ENCODE measurements at regions of chr6 and their contacts with region 1.

Region 1: GRCh38 chr6:15245361-15246216 is at the start of gene JARID2:
- DNase-seq: peak; percentile 94 to 98 (median 95)
- H3K4me3 ChIP-seq: peak within 1 kb of the TSS; percentile 75 to 96
- H3K4me3 Mint-ChIP-seq: peak within 1 kb of the TSS; percentile 98 to 100 (median 99)
- H3K27ac ChIP-seq: peak within 1 kb of the TSS; percentile 90
- H3K27ac Mint-ChIP-seq: peak within 1 kb of the TSS; percentile 96 to 99 (median 98)
- H3K4me1 ChIP-seq: peaks cover 32% of the 10 kb centered on the region
- H3K4me1 Mint-ChIP-seq: peaks cover 19 to 49% (median 29%) of the 10 kb centered on the region in 4 donors
- H3K27me3 ChIP-seq: no peaks in the 10 kb centered on the region
- H3K27me3 Mint-ChIP-seq: peaks cover 0 to 5% of the 10 kb centered on the region in 2 donors
- total RNA-seq, gene JARID2: 20.2 to 21.6 TPM

Region 2: GRCh38 chr6:13574149-13574570 is 1671.4 kb before region 1 on chr6:
- CTCF ChIA-PET with region 1: no interaction called
- POLR2A ChIA-PET with region 1: no interaction called
- intact Hi-C with region 1: loop called (anchors 2 kb)
- DNase-seq: peak; percentile 94 to 97 (median 96)
- H3K4me3 ChIP-seq: peak overlapping the region; percentile 70 to 86
- H3K4me3 Mint-ChIP-seq: peak overlapping the region; percentile 92 to 98 (median 96)
- H3K27ac ChIP-seq: peak overlapping the region; percentile 89
- H3K27ac Mint-ChIP-seq: peak overlapping the region; percentile 96 to 99 (median 98)
- H3K4me1 ChIP-seq: peaks cover 16% of the 10 kb centered on the region
- H3K4me1 Mint-ChIP-seq: peaks cover 13 to 40% (median 24%) of the 10 kb centered on the region in 4 donors
- H3K27me3 ChIP-seq: no peaks in the 10 kb centered on the region
- H3K27me3 Mint-ChIP-seq: peaks cover 0 to 2% of the 10 kb centered on the region in 2 donors

Region 3: GRCh38 chr6:14117158-14118090 is 1128.2 kb before region 1 on chr6 and contains the start of gene CD83:
- CTCF ChIA-PET with region 1: no interaction called
- POLR2A ChIA-PET with region 1: no interaction called
- intact Hi-C with region 1: loop called (anchors 5 kb)
- DNase-seq: peak; percentile 85 to 91 (median 87)
- H3K4me3 ChIP-seq: peak within 1 kb of the TSS; percentile 80 to 93
- H3K4me3 Mint-ChIP-seq: peak within 1 kb of the TSS; percentile 88 to 98 (median 95)
- H3K27ac ChIP-seq: peak within 1 kb of the TSS; percentile 91
- H3K27ac Mint-ChIP-seq: peak within 1 kb of the TSS; percentile 92 to 97 (median 96)
- H3K4me1 ChIP-seq: peaks cover 41% of the 10 kb centered on the region
- H3K4me1 Mint-ChIP-seq: peaks cover 29 to 53% (median 31%) of the 10 kb centered on the region in 4 donors
- H3K27me3 ChIP-seq: no peaks in the 10 kb centered on the region
- H3K27me3 Mint-ChIP-seq: no peaks in the 10 kb centered on the region
- total RNA-seq, gene CD83: 5.8 to 7.0 TPM

Region 4: DNA sequence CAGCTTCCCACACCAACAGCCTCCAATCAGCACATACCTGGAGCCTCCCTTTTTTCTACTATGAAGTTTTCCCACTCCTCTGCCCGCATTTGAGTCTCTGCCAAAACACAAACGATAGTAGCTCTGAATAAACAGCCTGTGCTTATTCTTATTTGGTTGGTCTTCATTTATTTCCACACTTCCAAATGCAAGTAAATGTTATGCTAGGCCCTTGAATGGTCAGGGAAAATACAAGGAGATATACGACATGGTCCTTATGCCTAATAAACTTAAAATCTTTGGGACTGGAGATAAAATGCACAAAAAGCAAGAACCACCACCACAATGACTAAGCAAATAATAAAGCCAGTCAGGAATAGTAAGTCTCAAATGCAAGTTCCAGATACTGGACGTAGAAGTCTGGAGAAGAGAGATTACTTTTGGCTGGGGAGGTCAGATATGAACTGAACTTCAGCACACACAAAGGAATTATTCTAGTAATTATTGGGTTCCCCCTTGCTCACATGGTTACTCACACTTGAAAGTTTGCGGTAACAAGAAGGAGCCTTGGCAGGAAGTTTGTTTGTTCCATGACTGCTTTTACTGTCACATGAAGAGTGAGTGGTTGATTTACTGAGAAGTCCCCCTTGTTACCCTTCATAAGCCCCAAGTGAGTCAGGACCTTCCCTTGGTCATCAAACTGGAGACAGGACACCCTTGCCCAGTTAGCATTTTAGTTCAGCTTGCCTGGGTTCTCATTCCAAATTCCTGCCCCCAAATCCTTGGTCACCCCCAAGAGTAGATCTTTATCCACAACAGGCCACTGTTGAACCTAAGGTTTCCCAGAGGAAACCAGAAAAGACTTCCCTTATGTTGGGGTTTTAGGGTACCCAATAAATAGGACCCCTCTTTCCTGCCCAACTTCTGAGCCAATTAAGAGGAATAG is 510.9 kb before region 1 on chr6:
- CTCF ChIA-PET with region 1: no interaction called
- POLR2A ChIA-PET with region 1: no interaction called
- intact Hi-C with region 1: loop called (anchors 5 kb)
- DNase-seq: peak in 4 of 5 donors; percentile 33 to 59 (median 50)
- H3K4me3 ChIP-seq: no peak overlapping the region
- H3K4me3 Mint-ChIP-seq: peak overlapping the region in 7 of 8 donors; percentile 23 to 59 (median 38)
- H3K27ac ChIP-seq: no peak overlapping the region
- H3K27ac Mint-ChIP-seq: peak overlapping the region; percentile 48 to 89 (median 78)
- H3K4me1 ChIP-seq: peaks cover 64% of the 10 kb centered on the region
- H3K4me1 Mint-ChIP-seq: peaks cover 36 to 49% (median 45%) of the 10 kb centered on the region in 4 donors
- H3K27me3 ChIP-seq: no peaks in the 10 kb centered on the region
- H3K27me3 Mint-ChIP-seq: no peaks in the 10 kb centered on the region

Region 5: DNA sequence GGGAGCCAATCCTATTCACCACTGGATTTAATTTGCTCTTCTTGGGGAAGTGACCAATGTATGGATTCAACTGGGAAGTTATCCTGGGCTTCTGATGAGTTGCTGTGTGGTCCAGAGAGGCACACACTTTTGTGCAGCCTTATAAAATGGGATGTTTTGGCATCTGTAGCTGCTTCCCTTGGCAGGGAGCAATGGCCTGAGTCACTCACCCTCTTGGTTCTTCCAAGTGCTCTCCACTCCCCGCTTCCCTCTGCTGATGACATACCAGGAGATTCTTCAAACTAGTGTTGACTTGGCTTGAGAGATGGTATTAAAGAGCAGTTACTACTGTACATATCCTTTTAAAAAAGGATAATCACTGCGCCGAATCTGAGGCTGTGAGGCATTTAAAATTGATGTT is 106.0 kb after region 1 on chr6:
- CTCF ChIA-PET with region 1: no interaction called
- POLR2A ChIA-PET with region 1: no interaction called
- intact Hi-C with region 1: no loop called
- DNase-seq: no peak
- H3K4me3 ChIP-seq: no peak overlapping the region
- H3K4me3 Mint-ChIP-seq: peak overlapping the region in 1 of 8 donors; percentile 32
- H3K27ac ChIP-seq: no peak overlapping the region
- H3K27ac Mint-ChIP-seq: no peak overlapping the region
- H3K4me1 ChIP-seq: peaks cover 7% of the 10 kb centered on the region
- H3K4me1 Mint-ChIP-seq: peaks cover 42 to 63% (median 52%) of the 10 kb centered on the region in 4 donors
- H3K27me3 ChIP-seq: no peaks in the 10 kb centered on the region
- H3K27me3 Mint-ChIP-seq: no peaks in the 10 kb centered on the region

Region 6: DNA sequence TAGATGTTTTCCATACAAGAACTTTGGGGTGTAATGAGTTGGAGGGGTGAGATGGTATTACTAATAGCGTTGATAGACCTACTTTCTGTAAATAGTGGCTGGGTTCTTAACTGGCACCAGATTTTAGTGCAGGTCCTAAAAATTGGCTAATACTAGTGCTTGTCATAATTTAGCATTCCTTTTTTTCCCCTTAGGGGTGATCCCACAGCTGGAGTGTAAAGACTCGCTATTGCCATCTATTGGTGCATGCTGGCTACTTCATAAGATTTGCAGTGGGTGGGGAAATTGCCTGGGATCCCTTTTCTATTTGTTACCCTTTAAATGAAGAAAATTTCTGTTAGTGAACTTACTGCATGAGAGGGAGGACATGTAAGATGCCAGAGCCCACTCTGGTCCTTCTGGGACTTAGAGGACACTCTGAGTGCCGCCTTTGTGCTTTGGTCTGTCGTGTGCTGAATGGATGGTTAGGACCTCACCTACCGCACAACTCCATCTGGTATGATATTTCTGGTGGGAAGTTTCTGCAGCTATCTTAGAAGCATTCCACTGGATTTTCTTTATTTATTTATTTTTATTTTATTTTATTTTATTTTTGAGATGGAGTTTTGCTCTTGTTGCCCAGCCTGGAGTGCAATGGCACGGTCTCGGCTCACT is 195.8 kb after region 1 on chr6:
- CTCF ChIA-PET with region 1: interaction called, 3 read pairs
- POLR2A ChIA-PET with region 1: interaction called, 3 read pairs
- intact Hi-C with region 1: loop called (anchors 2 kb)
- DNase-seq: peak in 4 of 5 donors; percentile 29 to 46 (median 37)
- H3K4me3 ChIP-seq: no peak overlapping the region
- H3K4me3 Mint-ChIP-seq: no peak overlapping the region
- H3K27ac ChIP-seq: no peak overlapping the region
- H3K27ac Mint-ChIP-seq: peak overlapping the region in 1 of 7 donors; percentile 3
- H3K4me1 ChIP-seq: peaks cover 43% of the 10 kb centered on the region
- H3K4me1 Mint-ChIP-seq: peaks cover 50 to 72% (median 58%) of the 10 kb centered on the region in 4 donors
- H3K27me3 ChIP-seq: no peaks in the 10 kb centered on the region
- H3K27me3 Mint-ChIP-seq: no peaks in the 10 kb centered on the region

Measured in CD4-positive, alpha-beta memory T cell (primary cell).